ENCODE measurements at regions of chr12 and their contacts with region 1.

Region 1: DNA sequence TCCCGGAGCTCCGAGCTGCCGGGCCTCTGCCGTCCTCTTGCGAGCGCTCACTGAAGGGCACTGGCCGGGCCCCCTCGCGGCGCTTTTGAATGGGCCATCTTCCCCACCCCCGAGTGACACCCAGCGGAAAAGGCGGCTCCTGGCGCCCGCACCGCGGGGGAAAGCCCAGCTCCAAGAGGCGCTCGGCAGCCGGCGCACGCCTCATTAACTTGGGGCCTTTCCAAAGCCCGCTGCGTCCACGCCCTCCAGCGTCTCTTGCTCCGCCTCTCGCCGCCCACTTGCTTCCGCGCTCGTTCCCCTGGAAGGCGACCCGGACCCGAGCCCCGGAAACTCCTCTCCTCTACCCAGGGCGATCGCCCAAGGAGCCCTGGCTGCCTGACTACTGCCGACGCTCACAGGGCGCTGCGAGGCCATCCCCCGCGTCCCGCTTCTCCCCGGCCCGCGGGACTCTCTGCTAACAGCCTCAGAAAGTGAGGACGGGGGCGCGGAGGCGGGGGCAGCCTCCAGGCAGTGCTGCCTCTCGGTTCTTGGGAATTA is at the start of gene PHLDA1:
- DNase-seq: peak; percentile 98
- H3K4me3 ChIP-seq: peak within 1 kb of the TSS; percentile 68 to 86 (median 80)
- H3K27ac ChIP-seq: peak within 1 kb of the TSS; percentile 93 to 97 (median 96)
- H3K4me1 ChIP-seq: peaks cover 0 to 38% (median 34%) of the 10 kb centered on the region in 4 donors
- H3K27me3 ChIP-seq: no peaks in the 10 kb centered on the region
- CTCF ChIP-seq: peak; percentile 27 to 68 (median 62)
- EP300 ChIP-seq: no peak
- POLR2A ChIP-seq: peak; percentile 44
- total RNA-seq, gene PHLDA1: 5.0 to 25.3 (median 6.1) TPM

Region 2: DNA sequence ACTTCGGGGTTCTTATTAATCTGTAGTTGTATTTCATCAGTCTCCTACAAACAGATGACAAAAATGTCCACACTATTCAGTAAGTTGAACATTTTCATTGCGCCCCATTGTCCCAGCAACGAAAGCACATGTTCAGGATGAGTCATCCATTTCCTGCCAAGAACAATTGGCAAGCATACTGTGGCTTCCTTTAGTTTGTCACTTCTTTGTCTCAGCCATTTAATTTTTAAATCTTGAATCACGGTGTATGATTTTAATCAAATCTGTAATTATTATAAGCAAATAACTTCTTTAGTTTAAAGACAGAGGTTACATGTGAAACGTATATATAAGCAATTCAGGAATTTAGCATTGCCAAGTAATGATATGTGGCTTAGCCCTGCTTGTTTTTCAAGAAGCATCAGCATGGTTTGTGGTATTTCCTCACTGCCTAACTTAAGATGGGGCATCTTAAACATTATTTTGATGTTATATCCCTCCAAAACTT is 308.8 kb before region 1 on chr12:
- intact Hi-C with region 1: loop called (anchors 10 kb)
- DNase-seq: no peak
- H3K4me3 ChIP-seq: no peak overlapping the region
- H3K27ac ChIP-seq: peak overlapping the region; percentile 55 to 73 (median 60)
- H3K4me1 ChIP-seq: peaks cover 46 to 61% (median 50%) of the 10 kb centered on the region in 4 donors
- H3K27me3 ChIP-seq: no peaks in the 10 kb centered on the region
- CTCF ChIP-seq: no peak
- EP300 ChIP-seq: no peak
- POLR2A ChIP-seq: no peak

Region 3: GRCh38 chr12:75977952-75978671 is 53.5 kb before region 1 on chr12:
- intact Hi-C with region 1: loop called (anchors 5 kb)
- DNase-seq: no peak
- H3K4me3 ChIP-seq: no peak overlapping the region
- H3K27ac ChIP-seq: peak overlapping the region; percentile 60 to 74 (median 67)
- H3K4me1 ChIP-seq: peaks cover 27 to 34% (median 30%) of the 10 kb centered on the region in 4 donors
- H3K27me3 ChIP-seq: no peaks in the 10 kb centered on the region
- CTCF ChIP-seq: no peak
- EP300 ChIP-seq: no peak
- POLR2A ChIP-seq: no peak

Region 4: DNA sequence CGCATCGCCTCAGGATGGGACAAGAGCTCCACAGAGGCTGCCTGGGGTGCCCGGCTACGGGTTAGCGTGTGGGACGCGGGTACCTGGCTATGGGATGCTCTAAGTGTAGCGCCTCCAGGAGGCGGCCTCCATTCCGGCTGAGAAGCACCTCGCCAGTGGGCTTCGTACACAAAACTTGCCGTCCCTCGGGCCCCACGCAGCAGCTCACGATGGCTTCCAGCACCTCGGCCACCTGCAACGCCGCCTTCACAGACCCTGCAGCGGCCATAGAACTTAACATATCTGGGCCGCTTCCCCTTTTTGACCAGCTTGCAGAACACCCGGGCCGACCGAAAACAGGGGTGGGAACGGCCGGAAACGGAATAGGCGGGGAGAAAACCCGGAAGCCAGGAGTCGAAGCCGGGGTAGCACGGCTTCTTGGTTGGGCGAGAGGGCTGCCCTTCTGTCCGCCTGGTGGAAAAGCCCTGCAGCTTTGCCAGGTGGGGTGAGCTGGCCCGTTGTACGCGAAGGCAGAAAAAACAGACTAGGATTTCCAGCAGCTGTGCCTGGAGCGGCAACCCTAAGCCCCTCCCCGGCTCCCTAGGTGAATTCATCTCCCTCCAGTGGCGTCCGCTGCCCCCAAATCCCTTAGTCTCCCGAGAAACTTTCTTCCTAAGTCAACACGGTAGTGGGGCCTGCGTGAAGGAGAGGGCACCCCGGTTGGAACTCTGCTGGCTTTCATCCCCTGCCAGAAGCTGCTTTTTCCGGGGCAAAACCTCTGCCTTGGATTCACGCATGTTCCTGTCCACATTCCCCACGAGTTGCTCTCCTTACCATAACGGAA is 316.7 kb after region 1 on chr12 and contains the start of gene BBS10:
- intact Hi-C with region 1: loop called (anchors 5 kb)
- DNase-seq: peak; percentile 97
- H3K4me3 ChIP-seq: peak within 1 kb of the TSS; percentile 69 to 80 (median 72)
- H3K27ac ChIP-seq: peak within 1 kb of the TSS; percentile 84 to 91 (median 88)
- H3K4me1 ChIP-seq: peaks cover 17 to 42% (median 32%) of the 10 kb centered on the region in 4 donors
- H3K27me3 ChIP-seq: no peaks in the 10 kb centered on the region
- CTCF ChIP-seq: peak; percentile 39 to 56 (median 45)
- EP300 ChIP-seq: no peak
- POLR2A ChIP-seq: no peak
- total RNA-seq, gene BBS10: 10.4 to 21.6 (median 17.9) TPM